ENCODE measurements at regions of chr19 and their contacts with region 1.

Region 1: DNA sequence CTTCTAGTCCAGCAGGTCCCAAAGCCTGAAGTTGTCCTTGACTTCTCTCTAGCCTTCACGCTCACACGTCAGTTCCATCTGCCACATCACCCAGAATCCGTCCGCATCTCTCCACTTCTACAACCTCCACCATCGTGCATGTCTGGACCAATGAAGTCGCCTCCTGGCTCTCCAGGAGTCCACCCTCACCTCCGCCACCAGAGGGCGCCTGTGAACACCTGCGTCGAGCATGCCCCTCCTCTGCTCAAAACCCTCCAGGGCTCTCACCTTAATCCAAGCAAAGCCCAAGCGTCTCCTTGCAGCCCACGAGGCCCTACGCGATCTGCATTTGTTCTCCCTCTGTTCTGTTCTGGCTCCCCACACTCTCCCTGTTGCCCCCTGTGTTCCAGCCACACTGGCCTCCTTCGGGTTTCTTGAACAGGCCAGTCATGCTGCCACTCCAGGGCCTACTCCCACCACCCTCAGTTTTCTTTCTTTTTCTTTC is 3.7 kb downstream of the USHBP1 start:
- DNase-seq: no peak
- H3K4me3 ChIP-seq: no peak overlapping the region
- H3K27me3 ChIP-seq: no peaks in the 10 kb centered on the region; the same call in 1 of the 2 replicates
- CTCF ChIP-seq: peak; percentile 94

Region 2: DNA sequence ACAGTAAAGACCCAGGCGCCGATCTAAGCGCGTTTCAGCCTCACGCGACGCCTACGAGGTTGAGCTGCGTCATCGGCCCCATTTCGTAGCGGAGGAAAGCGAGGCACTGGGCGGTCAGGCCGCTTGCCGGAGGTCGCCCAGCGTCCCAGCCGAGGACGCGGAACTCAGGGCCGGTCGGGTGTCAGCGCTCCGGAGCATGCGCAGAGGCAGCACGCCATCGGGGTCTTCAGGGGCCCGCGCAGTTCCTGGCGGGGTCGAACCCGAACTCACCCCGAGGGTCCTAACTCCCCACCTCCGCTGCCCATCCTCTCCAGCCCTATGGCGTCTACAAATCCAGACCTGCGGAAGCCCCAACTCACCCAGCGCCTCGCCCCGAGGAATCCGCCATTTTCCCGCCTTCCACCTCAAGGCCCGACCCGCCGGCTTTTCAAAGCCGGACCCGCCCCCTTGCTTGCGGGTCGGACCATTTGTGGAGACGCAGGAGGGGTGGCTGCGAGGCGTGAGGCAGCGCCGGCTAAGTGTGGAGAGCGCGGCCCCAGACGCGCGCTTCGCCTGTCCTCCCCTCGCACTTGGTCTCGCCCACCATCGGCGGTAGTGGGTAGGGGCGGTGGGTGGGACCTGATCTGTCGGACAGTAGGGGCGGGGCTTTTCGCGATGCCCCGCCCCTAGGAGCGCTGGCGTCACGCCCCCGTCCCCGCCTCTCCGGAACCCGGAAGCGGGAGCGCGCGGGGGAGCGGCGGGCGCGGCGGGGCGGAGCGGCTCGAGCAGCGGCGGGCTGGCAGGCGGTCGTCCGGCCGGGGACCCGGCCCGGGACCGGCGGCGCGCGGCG is 185.6 kb before region 1 on chr19 and contains the starts of genes HAUS8 and MYO9B:
- CTCF ChIA-PET with region 1: interaction called, 3 read pairs
- POLR2A ChIA-PET with region 1: interaction called, 12 read pairs
- DNase-seq: peak; percentile 93
- H3K4me3 ChIP-seq: peak within 1 kb of the TSS; percentile 95
- H3K27me3 ChIP-seq: no peaks in the 10 kb centered on the region
- CTCF ChIP-seq: no peak
- polyA plus RNA-seq, gene HAUS8: 11.0 and 14.0 TPM in 2 replicates
- polyA plus RNA-seq, gene MYO9B: 26.5 and 40.8 TPM in 2 replicates

Region 3: GRCh38 chr19:17245244-17245984 is 15.5 kb before region 1 on chr19 and contains the start of gene NR2F6:
- CTCF ChIA-PET with region 1: interaction called, 18 read pairs
- POLR2A ChIA-PET with region 1: no interaction called
- DNase-seq: no peak
- H3K4me3 ChIP-seq: peak within 1 kb of the TSS; percentile 96
- H3K27me3 ChIP-seq: no peaks in the 10 kb centered on the region
- CTCF ChIP-seq: no peak
- polyA plus RNA-seq, gene NR2F6: 26.1 and 28.0 TPM in 2 replicates

Region 4: DNA sequence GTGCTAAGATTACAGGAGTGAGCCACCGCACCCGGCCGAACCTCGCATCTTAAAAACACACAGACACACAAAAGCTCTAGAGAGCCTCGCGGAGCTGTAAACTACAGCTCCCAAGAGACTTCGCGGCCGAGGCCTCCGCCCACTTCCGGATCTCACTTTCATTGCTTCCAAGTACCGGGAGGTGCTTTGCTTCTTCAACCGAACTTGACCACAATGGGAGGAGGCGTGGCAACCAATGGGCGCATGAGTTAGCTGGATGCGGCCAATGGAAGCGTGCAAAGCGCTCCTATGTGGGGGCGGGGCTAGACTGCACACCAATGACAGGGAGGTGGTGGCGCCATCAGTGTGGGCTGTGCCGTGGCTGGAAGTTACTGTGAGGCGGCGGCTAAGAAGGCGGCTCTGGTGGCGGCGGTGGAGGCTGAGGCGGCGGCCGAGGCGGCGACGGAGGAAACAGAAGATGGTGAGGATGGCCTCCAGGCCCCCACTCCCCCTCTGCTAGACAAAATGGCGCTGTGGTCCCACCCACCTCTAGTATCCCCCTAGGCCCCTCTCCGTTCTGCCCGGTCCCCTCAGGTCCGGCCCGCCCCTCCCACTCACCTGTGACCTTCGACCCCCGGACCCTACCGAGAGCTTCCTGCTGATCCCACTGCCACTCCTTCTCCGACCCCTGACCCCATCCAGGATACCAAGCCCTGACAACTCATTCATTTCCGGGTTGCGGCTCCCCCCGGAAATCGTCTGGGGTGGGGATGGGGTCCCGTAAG is 48.5 kb after region 1 on chr19 and contains the start of gene DDA1:
- CTCF ChIA-PET with region 1: no interaction called
- POLR2A ChIA-PET with region 1: no interaction called
- DNase-seq: peak; percentile 99
- H3K4me3 ChIP-seq: peak within 1 kb of the TSS; percentile 83
- H3K27me3 ChIP-seq: no peaks in the 10 kb centered on the region
- CTCF ChIP-seq: no peak
- polyA plus RNA-seq, gene DDA1: 52.7 and 55.6 TPM in 2 replicates

Region 5: DNA sequence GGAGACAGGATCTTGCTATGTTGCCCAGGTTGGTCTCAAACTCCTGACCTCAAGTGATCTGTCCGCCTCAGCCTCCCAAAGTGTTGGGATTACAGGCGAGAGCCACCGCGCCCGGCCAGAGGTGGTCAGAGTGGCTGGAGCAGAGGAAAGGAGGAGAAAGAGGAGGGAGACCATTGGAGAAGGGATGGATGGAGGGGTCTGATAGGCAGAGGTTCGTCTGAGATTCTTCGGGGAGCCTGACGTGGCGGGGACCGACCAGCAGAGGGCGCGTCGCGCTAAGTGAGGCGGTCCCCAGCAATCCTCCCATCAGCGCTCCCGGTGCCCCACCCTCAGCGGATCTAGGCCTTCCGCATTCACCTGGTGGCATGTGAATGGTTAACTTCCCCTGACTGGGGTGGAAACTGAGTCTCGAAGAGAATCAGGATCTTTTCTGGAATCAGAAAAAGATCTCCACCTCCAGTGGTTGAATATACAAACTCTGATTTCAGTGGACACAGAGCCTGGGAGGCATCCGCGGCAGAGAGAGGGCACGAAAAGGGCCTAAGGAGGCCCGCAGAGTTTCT is 85.3 kb after region 1 on chr19:
- CTCF ChIA-PET with region 1: no interaction called
- POLR2A ChIA-PET with region 1: no interaction called
- DNase-seq: no peak
- H3K4me3 ChIP-seq: no peak overlapping the region
- H3K27me3 ChIP-seq: no peaks in the 10 kb centered on the region
- CTCF ChIP-seq: peak; percentile 94